ENCODE measurements at regions of chr11 and their contacts with region 1.

Region 1: GRCh38 chr11:63961608-63962412 is 12.6 kb upstream of the COX8A start:
- H3K4me3 ChIP-seq: no peak overlapping the region
- H3K27ac ChIP-seq: no peak overlapping the region
- H3K4me1 ChIP-seq: no peaks in the 10 kb centered on the region
- CTCF ChIP-seq: no peak

Region 2: DNA sequence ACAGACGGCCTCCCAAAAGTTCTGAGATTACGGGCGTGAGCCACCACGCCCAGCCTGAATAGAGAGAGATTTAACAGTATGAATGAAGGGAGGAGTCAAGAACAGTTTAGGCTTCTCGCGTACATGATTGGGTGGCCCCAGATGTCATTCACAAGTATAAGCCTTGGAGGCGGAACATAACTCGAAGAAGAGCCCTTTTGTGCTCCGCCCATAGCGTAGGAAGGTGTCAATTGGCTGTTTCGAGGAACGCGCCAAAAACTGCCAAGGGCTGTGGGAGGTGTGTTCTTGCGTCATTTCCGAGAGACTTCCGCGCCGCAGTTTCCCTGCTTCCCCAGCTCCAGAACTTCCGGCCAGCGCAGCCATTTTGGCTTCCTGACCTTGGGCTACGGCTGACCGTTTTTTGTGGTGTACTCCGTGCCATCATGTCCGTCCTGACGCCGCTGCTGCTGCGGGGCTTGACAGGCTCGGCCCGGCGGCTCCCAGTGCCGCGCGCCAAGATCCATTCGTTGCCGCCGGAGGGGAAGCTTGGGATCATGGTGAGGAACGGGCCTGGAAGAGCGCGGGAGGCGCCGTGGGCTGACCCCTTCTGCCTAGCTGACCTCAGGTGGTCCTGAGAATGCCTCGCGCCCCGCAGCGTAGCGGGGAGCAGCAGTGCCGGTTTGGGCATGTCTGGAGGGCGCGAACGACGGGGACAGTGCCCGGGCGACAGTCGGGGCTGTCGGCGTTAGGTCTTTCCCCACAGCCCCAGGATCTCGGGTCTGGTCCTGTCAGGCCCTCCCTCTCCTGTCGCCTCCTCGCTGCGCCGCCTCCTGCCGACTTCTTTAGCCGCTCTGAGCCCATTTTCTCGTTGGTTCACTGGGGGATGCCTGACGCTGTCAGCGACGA is 12.7 kb after region 1 on chr11 and contains the start of gene COX8A:
- CTCF ChIA-PET with region 1: no interaction called
- POLR2A ChIA-PET with region 1: interaction called, 11 read pairs
- H3K4me3 ChIP-seq: peak within 1 kb of the TSS; percentile 96
- H3K27ac ChIP-seq: peak within 1 kb of the TSS; percentile 84
- H3K4me1 ChIP-seq: no peaks in the 10 kb centered on the region
- CTCF ChIP-seq: peak; percentile 28; the same call in 1 of the 2 replicates

Measured in HEK293 (cell line).